ENCODE measurements at regions of chr10 and their contacts with region 1.

Region 1: GRCh38 chr10:102072673-102073527 is 7.8 kb downstream of the HPS6 start:
- DNase-seq: peak; percentile 65
- ATAC-seq: peak; percentile 95
- H3K4me3 Mint-ChIP-seq: no peak overlapping the region
- H3K27ac Mint-ChIP-seq: no peak overlapping the region
- H3K4me1 Mint-ChIP-seq: no peaks in the 10 kb centered on the region
- H3K27me3 Mint-ChIP-seq: no peaks in the 10 kb centered on the region
- CTCF ChIP-seq: peak; percentile 73

Region 2: DNA sequence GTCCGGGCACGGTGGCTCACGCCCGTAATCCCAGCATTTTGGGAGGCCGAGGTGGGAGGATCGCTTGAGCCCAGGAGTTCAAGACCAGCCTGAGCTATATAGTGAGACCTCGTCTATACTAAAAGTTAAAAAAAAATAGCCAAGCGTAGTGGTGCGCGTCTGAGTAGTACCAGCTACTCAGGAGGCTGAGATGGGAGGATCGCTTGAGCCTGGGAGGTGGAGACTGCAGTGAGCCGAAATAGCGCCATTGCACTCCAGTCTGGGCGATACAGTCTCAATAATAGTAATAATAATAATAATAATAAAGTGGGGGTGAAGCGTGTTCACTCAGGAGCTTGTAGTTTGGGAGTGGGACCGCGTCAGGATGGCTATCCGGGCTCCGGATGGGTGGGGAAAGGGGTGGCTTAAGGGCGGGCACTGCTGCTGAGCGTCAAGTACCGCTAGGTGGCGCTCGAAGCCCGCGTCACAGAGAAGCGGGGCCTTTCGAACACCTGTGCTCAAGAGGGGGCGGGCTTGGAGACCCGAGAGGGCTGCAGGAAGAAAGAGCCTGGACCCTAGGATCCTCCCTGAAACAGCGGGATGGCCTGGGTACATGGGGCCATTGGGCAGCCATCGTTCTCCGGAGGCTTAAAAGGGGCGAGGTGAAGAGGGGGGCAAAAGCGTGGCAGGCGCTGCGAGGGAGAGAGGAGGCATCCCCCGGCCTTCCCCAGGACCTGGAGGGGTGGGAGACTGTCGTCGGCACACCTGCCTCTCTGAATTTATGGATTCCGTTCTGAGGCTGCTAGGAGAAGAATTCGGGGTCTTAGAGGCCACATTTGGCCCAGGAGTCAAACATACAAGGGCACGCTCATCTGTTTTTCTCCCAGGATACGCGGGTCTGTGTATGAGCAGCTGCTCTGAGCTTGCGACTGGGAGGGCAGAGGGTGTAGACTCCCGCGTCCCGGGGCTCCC is 858.2 kb before region 1 on chr10:
- CTCF ChIA-PET with region 1: no interaction called
- POLR2A ChIA-PET with region 1: no interaction called
- intact Hi-C with region 1: loop called (anchors 5 kb)
- DNase-seq: peak; percentile 72
- ATAC-seq: peak; percentile 75
- H3K4me3 Mint-ChIP-seq: peak overlapping the region; percentile 60
- H3K27ac Mint-ChIP-seq: peak overlapping the region; percentile 68
- H3K4me1 Mint-ChIP-seq: peaks cover 32% of the 10 kb centered on the region
- H3K27me3 Mint-ChIP-seq: peaks cover 56% of the 10 kb centered on the region
- CTCF ChIP-seq: peak; percentile 73

Region 3: DNA sequence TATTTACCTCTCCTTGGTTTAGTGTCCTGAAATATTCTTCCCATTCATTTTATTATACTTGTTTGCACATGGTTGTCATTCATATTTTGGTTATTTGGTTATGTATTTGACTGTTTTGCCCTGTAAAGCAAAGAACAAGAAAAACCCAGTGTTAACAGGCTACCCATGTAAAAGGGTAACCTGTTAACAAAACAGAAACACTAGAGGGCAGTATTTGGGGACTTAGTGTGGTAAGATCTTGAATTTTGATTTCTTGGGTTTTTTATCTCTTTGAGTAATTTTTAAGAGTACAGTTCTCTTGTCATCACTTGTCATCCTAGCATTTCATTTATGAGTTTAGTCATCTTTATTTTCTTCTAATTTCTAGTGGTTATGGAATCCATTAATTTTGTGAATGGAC is 536.1 kb before region 1 on chr10:
- CTCF ChIA-PET with region 1: no interaction called
- POLR2A ChIA-PET with region 1: no interaction called
- intact Hi-C with region 1: loop called (anchors 2 kb)
- DNase-seq: no peak
- ATAC-seq: no peak
- H3K4me3 Mint-ChIP-seq: no peak overlapping the region
- H3K27ac Mint-ChIP-seq: no peak overlapping the region
- H3K4me1 Mint-ChIP-seq: no peaks in the 10 kb centered on the region
- H3K27me3 Mint-ChIP-seq: no peaks in the 10 kb centered on the region
- CTCF ChIP-seq: no peak

Region 4: DNA sequence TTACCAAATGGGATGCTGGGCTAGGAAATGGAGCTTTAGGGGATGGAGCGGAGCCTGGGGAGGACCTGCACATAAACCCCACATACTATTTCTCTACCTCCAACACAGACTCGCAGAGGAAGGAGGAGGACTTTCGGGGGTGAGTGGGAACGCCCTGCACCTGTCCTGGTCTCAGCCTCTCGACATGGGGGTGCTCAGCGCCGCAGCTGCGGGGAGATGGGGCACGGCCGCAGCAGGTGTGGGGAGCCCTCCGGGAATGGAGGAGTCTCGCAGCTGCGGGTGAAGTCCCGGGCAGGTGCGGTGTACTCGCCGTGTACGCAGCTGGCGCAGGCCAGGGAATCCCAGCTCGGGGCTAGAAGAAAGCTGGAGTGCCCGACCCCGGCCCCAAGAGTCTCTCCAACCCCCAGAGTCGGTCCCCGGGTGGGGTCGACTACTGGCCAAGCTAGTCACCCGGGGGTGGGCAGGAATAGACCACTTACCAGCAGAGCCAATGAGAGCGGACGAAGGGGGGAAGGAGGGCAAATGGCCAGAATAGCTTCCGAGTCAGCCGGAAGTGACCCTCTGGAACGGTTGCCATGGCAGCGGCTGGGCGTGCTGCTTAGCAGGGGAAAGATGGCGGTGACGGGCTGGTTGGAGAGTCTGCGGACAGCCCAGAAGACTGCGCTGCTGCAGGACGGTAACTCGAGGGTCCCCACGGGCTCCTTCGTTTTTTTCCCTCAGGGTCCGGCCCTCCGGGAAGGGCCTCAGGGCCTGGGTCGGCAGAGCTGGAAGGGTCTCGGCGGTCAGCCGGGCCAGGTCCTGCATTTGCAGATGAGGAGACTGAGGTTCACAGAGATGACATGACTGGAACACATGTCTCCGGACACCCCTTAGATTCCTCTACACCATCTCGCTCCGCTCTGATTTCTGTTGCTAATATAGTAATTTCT is 484.9 kb before region 1 on chr10 and contains the starts of genes DPCD and POLL:
- CTCF ChIA-PET with region 1: no interaction called
- POLR2A ChIA-PET with region 1: no interaction called
- intact Hi-C with region 1: loop called (anchors 5 kb)
- DNase-seq: peak; percentile 83
- ATAC-seq: peak; percentile 97
- H3K4me3 Mint-ChIP-seq: peak within 1 kb of the TSS; percentile 92
- H3K27ac Mint-ChIP-seq: peak within 1 kb of the TSS; percentile 80
- H3K4me1 Mint-ChIP-seq: peaks cover 19% of the 10 kb centered on the region
- H3K27me3 Mint-ChIP-seq: no peaks in the 10 kb centered on the region
- CTCF ChIP-seq: no peak
- total RNA-seq, gene DPCD: 2.3 and 2.9 TPM in 2 replicates
- total RNA-seq, gene POLL: 35.0 and 39.5 TPM in 2 replicates

Region 5: GRCh38 chr10:101602761-101603398 is 470.0 kb before region 1 on chr10:
- CTCF ChIA-PET with region 1: no interaction called
- POLR2A ChIA-PET with region 1: no interaction called
- intact Hi-C with region 1: loop called (anchors 2 kb)
- DNase-seq: peak; percentile 36
- ATAC-seq: peak; percentile 75
- H3K4me3 Mint-ChIP-seq: no peak overlapping the region
- H3K27ac Mint-ChIP-seq: no peak overlapping the region
- H3K4me1 Mint-ChIP-seq: no peaks in the 10 kb centered on the region
- H3K27me3 Mint-ChIP-seq: no peaks in the 10 kb centered on the region
- CTCF ChIP-seq: no peak

Region 6: GRCh38 chr10:101889256-101890210 is 183.4 kb before region 1 on chr10:
- CTCF ChIA-PET with region 1: interaction called, 9 read pairs
- POLR2A ChIA-PET with region 1: no interaction called
- intact Hi-C with region 1: loop called (anchors 1 kb)
- DNase-seq: peak; percentile 62
- ATAC-seq: peak; percentile 96
- H3K4me3 Mint-ChIP-seq: no peak overlapping the region
- H3K27ac Mint-ChIP-seq: peak overlapping the region; percentile 79
- H3K4me1 Mint-ChIP-seq: peaks cover 41% of the 10 kb centered on the region
- H3K27me3 Mint-ChIP-seq: no peaks in the 10 kb centered on the region
- CTCF ChIP-seq: peak; percentile 62

Measured in activated B cell treated with CpG ODN at 0.5 μM for 24 hours (primary cell).